ENCODE measurements at regions of chr22 and their contacts with region 1.

Region 1: GRCh38 chr22:32764330-32765131 is 37.0 kb upstream of the TIMP3 start:
- DNase-seq: peak; percentile 37 to 67
- ATAC-seq: peak; percentile 81 to 86
- H3K4me3 ChIP-seq: no peak overlapping the region
- H3K27ac ChIP-seq: peak overlapping the region; percentile 68 to 80 (median 78)
- H3K4me1 ChIP-seq: peaks cover 14 to 15% of the 10 kb centered on the region in 2 donors
- H3K27me3 ChIP-seq: no peaks in the 10 kb centered on the region
- CTCF ChIP-seq: no peak
- POLR2A ChIP-seq: no peak

Region 2: DNA sequence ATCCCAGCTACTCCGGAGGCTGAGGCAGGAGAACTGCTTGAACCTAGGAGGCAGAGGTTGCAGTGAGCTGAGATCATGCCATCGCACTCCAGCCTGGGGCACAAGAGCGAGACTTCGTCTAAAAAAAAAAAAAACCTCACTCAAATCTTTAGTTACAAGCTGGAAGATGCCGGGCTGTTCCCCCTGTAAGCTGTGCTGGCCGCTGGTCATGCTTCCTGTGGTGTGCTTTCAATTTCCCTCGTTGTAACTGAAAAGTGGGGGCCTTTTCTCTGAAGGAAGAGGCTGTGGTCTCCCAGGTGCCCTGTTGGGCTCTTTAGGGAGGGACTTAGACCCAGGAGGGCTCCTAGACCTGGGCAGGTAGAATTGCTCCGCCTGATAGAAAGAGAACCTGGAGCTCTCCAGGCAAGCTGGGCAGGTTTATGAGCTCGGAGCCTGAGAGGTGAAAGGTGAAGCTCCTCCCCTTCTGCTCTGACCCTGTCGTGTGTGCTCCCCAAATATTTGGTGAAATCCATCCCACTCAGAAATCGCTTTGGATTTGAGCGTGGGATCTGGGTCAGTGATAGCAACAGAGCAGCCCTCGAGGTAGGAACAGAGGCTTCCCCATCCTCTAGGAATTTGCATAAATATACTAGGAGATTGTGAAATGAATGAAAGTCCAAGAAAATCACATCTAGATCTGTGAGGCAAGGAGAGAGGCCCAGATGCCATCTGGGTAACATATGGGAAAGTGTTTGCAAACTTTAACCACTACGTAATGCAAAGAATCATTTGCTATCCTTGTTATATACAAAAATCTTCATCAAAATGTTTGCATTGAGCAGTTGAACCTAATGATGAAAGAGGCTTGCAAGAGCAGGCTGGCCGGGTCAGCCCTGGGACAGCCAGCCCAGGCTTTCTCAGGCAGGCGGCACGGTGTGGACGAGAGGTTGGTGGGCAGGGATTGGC is 135.6 kb before region 1 on chr22:
- in situ Hi-C with region 1: no loop called
- intact Hi-C with region 1: loop called (anchors 5 kb)
- DNase-seq: no peak
- ATAC-seq: no peak
- H3K4me3 ChIP-seq: no peak overlapping the region
- H3K27ac ChIP-seq: peak overlapping the region; percentile 66 to 81 (median 76)
- H3K4me1 ChIP-seq: peaks cover 16 to 26% of the 10 kb centered on the region in 2 donors
- H3K27me3 ChIP-seq: no peaks in the 10 kb centered on the region
- CTCF ChIP-seq: no peak
- POLR2A ChIP-seq: no peak